Heart left ventricle (tissue), 16 donors: ENCODE measurements at regions of chr2 and their contacts with region 1.

Region 1: DNA sequence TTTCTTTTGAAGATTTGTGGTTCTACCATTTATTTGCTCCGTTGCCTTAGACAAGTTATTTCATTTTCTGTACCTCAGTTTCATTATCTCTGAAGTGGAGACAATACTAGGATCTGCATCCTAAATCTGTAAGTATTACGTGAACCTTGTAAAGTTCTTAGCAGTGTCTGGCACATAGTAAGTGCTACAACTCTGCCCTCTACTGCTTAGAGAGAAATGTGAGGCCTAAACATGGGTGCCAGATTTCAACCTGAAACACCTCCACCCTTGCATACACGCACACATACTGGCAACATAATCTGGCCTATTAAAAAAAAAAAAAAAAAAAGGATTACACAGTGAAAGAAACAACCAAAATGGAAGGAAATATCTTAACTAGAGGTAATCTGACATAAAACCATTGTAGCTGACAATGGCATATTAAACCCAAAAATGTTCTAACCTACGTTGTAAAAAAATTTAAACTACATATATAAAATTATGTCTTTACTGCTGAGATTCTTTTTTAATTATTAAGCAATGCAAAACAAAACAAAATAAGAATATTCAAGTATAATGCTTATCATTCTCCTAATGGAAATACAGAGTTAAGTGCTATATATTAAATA is 132.6 kb downstream of the MAP2 start:
- DNase-seq: no peak
- ATAC-seq: peak in 3 of 4 donors; percentile 70 to 87 (median 83)
- H3K4me3 ChIP-seq: no peak overlapping the region
- H3K27ac ChIP-seq: no peak overlapping the region
- H3K4me1 ChIP-seq: no peaks in the 10 kb centered on the region
- H3K27me3 ChIP-seq: no peaks in the 10 kb centered on the region
- CTCF ChIP-seq: peak; percentile 30 to 76 (median 58)
- POLR2A ChIP-seq: no peak

Region 2: GRCh38 chr2:209431701-209432100 is 124.8 kb before region 1 on chr2:
- intact Hi-C with region 1: loop called in 2 of 10 experiments (anchors 5 kb)
- DNase-seq: no peak
- ATAC-seq: no peak
- H3K4me3 ChIP-seq: no peak overlapping the region
- H3K27ac ChIP-seq: no peak overlapping the region
- H3K4me1 ChIP-seq: peaks cover 0 to 3% (median 0%) of the 10 kb centered on the region in 12 donors
- H3K27me3 ChIP-seq: no peaks in the 10 kb centered on the region
- CTCF ChIP-seq: no peak
- POLR2A ChIP-seq: no peak

Region 3: DNA sequence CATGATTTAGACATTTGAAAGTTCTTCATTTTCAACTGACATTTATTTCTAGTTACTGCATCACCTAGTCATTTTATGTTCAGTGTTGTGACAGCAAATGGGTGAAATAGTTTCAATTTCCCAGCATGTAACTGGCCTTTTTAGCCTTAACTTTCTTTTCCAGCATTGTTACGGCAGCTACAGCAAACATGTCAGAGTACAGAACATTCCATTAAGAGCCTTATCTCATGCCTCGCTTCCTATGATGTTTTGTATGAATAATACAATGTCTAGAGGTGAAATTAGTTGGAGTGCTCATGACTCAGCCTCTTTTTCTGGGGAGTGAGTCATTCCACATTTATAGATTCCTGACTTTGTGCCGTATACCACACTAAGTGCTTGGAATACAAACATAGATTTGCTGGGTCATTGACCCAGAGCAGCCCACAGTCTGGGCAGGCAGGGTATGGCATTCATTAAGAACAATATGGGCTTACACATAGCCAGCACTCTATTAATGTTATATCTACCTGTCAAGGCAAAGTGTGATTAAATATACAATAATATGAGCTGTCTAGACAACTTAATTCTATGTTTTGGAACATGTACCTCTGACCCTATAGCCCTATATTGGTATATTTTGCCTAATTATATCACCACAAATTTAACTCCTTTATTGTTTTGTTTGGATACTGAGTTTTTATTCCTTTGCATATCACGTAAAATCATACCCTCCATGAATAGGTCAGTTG is 60.4 kb before region 1 on chr2:
- intact Hi-C with region 1: loop called in 1 of 10 experiments (anchors 10 kb)
- DNase-seq: peak in 4 of 5 donors; percentile 21 to 49 (median 39)
- ATAC-seq: peak; percentile 96 to 98 (median 98)
- H3K4me3 ChIP-seq: peak overlapping the region in 4 of 12 donors; percentile 6 to 24 (median 15)
- H3K27ac ChIP-seq: peak overlapping the region; percentile 58 to 93 (median 86)
- H3K4me1 ChIP-seq: peaks cover 0 to 28% (median 16%) of the 10 kb centered on the region in 12 donors
- H3K27me3 ChIP-seq: no peaks in the 10 kb centered on the region
- CTCF ChIP-seq: no peak
- POLR2A ChIP-seq: no peak